Endothelial cell of umbilical vein (primary cell): ENCODE measurements at regions of chr22 and their contacts with region 1.

Region 1: DNA sequence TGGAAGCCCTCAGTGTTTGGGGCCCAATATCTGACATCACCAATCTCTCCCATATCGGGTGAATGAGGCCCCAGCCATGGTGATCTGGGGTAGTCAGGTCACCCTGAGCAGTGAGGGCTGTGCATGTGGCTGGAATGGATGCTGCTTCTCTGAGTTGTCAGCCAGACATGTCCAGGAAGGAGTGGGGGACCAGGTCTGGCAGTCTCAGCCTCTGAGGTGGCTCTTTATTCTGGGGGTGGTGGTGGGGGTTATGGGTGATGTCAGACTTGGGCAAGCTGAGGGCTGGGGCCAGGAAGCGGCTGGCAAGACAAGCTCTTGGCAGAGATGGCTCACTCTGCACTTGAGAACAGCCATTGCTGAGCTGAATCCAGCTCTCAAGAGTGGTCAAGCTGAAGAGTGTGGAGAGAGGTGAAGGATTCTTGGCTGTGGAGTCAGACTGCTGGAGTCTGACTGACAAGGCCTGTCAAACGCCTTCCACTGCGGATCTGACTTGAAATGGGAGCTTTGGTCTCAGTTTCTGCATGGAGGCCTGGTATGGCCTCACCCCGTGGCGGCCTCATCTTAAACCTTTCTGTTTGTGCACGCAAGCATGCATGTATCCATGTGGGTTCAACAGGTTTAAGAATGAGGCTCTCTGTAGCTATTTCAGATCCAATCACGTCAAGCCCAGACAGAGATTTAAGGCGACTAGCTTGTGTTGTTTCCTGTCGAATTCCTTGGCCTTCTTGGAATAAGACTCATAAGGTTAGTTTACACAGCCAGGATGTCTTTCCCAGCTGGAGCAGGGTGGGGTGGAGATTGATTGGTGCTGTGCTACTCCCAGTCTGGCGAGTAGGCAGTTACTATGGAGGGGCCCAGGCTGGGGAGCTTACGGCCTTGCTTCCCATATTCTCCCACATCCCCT is 83.9 kb upstream of the TIMP3 start:
- DNase-seq: no peak
- H3K4me3 ChIP-seq: no peak overlapping the region
- H3K27ac ChIP-seq: no peak overlapping the region
- H3K4me1 ChIP-seq: no peaks in the 10 kb centered on the region
- H3K27me3 ChIP-seq: no peaks in the 10 kb centered on the region
- CTCF ChIP-seq: no peak
- POLR2A ChIP-seq: no peak

Region 2: DNA sequence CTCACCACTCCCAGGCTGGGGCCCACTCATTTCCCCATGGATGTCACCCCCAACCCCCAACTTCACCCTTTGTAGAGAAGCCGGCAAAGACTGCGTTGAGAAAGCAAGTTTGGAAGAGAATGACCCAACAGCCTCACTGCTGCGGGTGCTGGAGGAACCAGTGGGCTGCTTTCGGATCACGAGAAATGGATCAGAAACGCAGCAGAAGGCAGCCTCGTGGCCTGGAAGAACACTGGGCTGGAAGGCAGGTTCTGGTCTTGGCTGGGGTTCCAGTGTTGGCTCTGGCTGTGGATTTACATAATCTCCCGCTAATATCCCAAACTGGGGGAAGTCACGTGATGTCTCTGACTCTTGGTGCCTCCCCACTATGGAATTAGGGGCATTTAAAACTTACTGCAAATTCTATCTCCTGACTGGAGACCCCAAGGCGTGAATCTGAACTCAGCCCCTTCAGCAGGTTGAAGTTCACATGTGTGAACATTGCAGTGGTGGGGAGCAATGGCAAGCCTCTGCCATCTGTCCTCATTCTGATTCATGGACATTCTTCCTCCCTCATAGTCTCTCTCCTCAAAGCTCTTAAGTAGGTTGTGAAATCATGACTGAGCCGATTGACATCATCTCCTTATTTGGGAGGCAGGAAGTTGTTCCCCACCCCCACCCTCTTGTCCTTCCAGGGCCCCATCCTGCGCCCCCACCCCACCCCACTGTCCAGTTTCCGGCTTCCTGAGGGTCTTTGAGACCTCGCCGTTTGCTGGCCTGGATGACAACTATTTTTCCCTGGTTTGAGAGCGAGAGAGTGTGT is 46.9 kb after region 1 on chr22:
- CTCF ChIA-PET with region 1: no interaction called
- POLR2A ChIA-PET with region 1: no interaction called
- dilution Hi-C with region 1: no loop called
- intact Hi-C with region 1: loop called (anchors 1 kb)
- DNase-seq: no peak
- H3K4me3 ChIP-seq: no peak overlapping the region
- H3K27ac ChIP-seq: no peak overlapping the region
- H3K4me1 ChIP-seq: no peaks in the 10 kb centered on the region
- H3K27me3 ChIP-seq: no peaks in the 10 kb centered on the region
- CTCF ChIP-seq: no peak
- POLR2A ChIP-seq: no peak